Activated CD4-positive, alpha-beta T cell treated with anti-CD3 and anti-CD28 coated beads, Interleukin-2, amount 10 ng/mL, durations not matched to agents 24 days and 14 days (primary cell): ENCODE measurements at regions of chr5 and their contacts with region 1.

Region 1: GRCh38 chr5:75053304-75054133 is 1.2 kb upstream of the GCNT4 start:
- DNase-seq: peak; percentile 86
- H3K4me3 Mint-ChIP-seq: peak overlapping the region; percentile 87
- H3K27ac Mint-ChIP-seq: peak overlapping the region; percentile 46
- H3K4me1 Mint-ChIP-seq: peaks cover 53% of the 10 kb centered on the region
- H3K27me3 Mint-ChIP-seq: peaks cover 15% of the 10 kb centered on the region

Region 2: DNA sequence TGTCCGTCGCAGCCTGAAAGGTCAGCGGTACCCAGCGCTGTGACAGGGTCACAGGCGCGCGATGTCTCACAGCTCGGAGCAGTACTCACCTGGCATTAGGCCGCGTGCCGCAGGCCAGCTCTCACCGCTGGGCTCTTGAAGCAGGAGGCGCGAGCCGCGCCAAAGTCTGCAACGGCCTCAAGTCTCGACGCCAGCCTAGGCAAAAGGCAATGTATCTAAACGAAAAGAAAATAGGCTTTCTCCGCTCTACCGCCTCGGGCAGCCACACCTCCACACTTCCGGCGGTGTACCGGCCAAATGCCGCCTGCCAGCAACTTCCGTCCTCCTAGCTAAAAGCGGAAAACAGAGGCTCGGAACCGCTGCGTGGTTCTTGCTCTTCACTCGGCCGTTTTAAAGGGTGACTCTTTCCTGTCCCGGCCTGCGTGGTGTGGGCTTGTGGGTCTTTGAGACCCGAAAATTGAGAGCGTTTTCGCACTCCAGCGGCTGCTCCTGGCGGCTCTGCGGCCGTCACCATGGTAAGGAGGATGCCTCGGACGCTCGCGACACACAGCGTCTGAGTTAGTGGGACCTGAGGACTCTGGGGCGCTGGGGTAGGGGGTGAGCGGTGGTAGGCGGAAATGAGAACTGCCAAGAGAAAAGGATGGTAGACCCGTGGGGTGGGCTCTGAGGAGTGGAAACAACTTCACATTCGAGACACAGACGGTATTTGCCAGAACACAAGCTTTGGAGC is 286.5 kb before region 1 on chr5 and contains the starts of genes GFM2 and NSA2:
- intact Hi-C with region 1: loop called (anchors 2 kb)
- DNase-seq: peak; percentile 98
- H3K4me3 Mint-ChIP-seq: peak within 1 kb of the TSS; percentile 99
- H3K27ac Mint-ChIP-seq: peak within 1 kb of the TSS; percentile 98
- H3K4me1 Mint-ChIP-seq: peaks cover 25% of the 10 kb centered on the region
- H3K27me3 Mint-ChIP-seq: no peaks in the 10 kb centered on the region
- total RNA-seq, gene GFM2: 37.9 and 42.7 TPM in 2 replicates
- total RNA-seq, gene NSA2: 94.0 and 95.8 TPM in 2 replicates

Region 3: DNA sequence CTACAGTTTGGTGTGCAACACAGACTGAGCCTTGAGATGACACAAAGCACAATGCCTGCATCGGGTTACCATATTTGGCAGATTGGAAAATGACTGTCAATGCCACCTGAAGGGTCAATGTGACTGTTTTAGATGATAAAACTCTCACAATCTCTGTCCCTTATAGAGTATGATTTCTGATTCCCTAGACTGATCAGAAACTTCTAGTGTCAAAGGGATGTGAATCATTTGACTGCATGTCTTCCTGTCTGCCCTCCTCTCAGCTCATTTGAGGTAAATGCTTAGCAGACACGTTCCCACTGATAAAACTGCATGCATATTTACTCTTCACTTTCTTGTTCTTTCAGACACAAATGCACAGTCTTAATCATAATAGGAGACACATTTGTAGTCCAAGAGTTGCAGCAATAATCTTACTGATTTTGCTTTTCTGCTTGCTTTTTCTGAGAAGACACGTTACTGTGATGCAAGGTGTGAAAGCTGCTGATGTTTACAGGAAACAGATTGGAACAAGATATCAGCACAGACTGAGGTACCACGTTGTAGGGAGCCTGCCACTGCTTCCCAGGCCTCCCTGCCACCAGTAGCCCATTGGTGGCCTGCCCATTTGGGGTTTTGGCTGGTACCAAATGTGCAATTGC is 78.9 kb before region 1 on chr5:
- intact Hi-C with region 1: loop called (anchors 10 kb)
- DNase-seq: peak; percentile 64
- H3K4me3 Mint-ChIP-seq: peak overlapping the region; percentile 58
- H3K27ac Mint-ChIP-seq: peak overlapping the region; percentile 82
- H3K4me1 Mint-ChIP-seq: peaks cover 23% of the 10 kb centered on the region
- H3K27me3 Mint-ChIP-seq: peaks cover 1% of the 10 kb centered on the region

Region 4: GRCh38 chr5:75265731-75266130 is 212.2 kb after region 1 on chr5:
- intact Hi-C with region 1: loop called (anchors 2 kb)
- DNase-seq: no peak
- H3K4me3 Mint-ChIP-seq: no peak overlapping the region
- H3K27ac Mint-ChIP-seq: no peak overlapping the region
- H3K4me1 Mint-ChIP-seq: no peaks in the 10 kb centered on the region
- H3K27me3 Mint-ChIP-seq: peaks cover 8% of the 10 kb centered on the region

Region 5: DNA sequence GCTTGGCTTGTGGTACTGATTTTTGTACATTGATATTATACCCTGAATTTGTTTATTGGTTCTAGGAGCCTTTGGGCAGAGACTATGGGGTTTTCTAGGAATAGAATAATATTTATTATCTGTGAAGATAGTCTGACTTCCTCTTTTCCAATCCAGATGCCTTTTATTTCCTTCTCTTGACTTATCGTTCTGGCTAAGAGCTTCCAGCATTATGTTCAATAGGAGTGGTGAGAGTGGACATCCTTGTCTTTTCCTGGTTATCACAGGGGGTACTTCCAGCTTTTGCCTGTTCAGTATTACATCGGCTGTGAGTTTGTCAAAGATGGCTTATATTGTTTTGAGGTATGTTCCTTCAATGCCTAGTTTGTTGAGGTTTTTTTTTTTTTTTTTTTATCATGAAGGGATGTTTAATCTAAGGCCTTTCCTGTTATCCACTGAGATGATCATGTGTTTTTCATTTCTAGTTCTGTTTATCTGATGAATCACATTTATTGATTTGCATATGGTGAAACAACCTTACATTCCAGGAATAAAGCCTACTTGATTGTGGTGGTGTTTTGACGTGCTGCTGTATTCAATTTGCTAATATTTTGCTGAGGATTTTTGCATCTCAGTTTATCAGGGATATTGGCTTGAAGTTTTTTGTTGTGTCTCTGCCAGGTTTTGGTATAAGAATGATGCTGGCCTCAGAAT is 380.4 kb after region 1 on chr5:
- intact Hi-C with region 1: no loop called
- DNase-seq: no peak
- H3K4me3 Mint-ChIP-seq: no peak overlapping the region
- H3K27ac Mint-ChIP-seq: no peak overlapping the region
- H3K4me1 Mint-ChIP-seq: no peaks in the 10 kb centered on the region
- H3K27me3 Mint-ChIP-seq: no peaks in the 10 kb centered on the region

Region 6: DNA sequence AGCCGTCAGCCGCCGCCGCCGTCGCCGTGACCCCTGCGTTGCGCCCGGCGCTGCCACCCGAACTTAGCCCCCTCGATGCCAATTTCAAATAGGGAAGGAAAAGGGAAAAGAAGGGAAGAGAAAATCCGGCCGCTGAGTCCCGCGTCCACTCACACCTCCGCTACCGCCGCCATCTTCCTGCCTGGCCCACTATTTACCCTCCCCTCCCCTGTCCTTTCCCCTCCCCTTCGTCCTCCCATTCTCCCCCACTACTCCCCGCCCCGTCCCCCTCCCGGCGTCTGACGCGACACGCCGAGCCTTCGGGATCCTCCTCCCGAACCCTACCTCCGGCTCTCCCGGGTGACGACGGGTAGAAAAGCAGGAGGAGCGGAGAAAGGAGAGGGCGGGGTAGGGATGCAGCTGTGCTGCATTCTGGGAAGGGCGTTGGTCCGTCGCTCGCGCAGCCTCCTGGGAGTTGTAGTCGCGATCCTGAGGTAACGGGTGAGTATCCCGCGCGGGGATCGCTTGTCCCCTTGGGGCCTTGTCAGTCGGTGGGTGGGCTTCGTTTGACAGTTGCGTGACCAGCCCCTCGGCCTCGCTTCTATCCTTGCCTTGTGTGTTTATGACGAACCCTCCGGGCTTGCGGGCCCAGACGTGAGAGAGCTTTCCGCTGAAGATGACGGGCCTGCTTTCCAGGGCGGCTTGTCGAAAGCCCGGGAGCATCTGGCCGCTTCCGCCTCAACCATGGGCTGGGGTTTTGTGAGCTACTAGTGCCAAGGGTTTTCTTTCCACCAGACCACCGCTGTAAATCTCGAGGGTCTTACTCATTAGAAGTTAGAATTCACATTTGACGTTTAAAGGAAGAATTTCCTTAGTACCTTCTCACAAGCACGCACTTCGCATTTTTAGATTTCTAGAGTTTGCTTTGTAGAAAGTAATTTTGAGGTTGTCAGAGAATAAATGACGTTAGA is 458.2 kb after region 1 on chr5 and contains the starts of genes CERT1 and POLK:
- intact Hi-C with region 1: loop called (anchors 5 kb)
- DNase-seq: peak; percentile 99
- H3K4me3 Mint-ChIP-seq: peak within 1 kb of the TSS; percentile 95
- H3K27ac Mint-ChIP-seq: peak within 1 kb of the TSS; percentile 96
- H3K4me1 Mint-ChIP-seq: peaks cover 40% of the 10 kb centered on the region
- H3K27me3 Mint-ChIP-seq: no peaks in the 10 kb centered on the region
- total RNA-seq, gene CERT1: 46.4 and 49.2 TPM in 2 replicates
- total RNA-seq, gene POLK: 40.4 and 41.6 TPM in 2 replicates

Region 7: GRCh38 chr5:75668977-75669689 is 615.6 kb after region 1 on chr5:
- intact Hi-C with region 1: loop called (anchors 10 kb)
- DNase-seq: peak; percentile 83
- H3K4me3 Mint-ChIP-seq: peak overlapping the region; percentile 79
- H3K27ac Mint-ChIP-seq: peak overlapping the region; percentile 95
- H3K4me1 Mint-ChIP-seq: peaks cover 36% of the 10 kb centered on the region
- H3K27me3 Mint-ChIP-seq: no peaks in the 10 kb centered on the region

Region 8: GRCh38 chr5:76256116-76256889 is 1202.8 kb after region 1 on chr5:
- intact Hi-C with region 1: loop called (anchors 5 kb)
- DNase-seq: peak; percentile 89
- H3K4me3 Mint-ChIP-seq: no peak overlapping the region
- H3K27ac Mint-ChIP-seq: no peak overlapping the region
- H3K4me1 Mint-ChIP-seq: peaks cover 9% of the 10 kb centered on the region
- H3K27me3 Mint-ChIP-seq: peaks cover 34% of the 10 kb centered on the region